ENCODE measurements at regions of chr11 and their contacts with region 1.

Region 1: DNA sequence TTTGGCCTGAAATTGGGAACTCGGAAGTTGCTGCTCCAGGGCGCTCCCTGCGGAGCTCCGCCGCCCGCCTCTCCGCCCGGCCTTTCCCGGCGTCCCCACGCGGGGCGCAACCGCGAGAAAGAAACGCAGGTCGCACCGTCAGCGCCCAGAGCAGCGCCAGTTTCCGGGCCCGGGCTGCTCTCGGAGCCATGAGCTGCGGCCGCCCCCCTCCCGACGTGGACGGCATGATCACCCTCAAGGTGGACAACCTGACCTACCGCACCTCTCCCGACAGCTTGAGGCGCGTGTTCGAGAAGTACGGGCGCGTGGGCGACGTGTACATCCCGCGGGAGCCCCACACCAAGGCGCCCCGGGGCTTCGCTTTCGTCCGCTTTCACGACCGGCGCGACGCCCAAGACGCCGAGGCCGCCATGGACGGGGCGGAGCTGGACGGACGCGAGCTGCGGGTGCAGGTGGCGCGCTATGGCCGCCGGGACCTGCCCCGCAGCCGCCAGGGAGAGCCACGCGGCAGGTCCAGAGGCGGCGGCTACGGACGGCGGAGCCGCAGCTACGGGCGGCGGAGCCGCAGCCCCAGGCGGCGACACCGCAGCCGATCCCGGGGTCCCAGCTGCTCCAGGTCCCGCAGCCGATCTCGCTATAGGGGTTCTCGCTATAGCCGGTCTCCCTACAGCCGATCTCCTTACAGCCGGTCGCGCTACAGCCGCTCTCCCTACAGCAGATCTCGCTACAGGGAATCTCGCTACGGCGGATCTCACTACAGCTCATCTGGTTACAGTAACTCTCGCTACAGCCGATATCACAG is 521 bp downstream of the SRSF8 start:
- DNase-seq: peak; percentile 60 to 95 (median 88)

Region 2: DNA sequence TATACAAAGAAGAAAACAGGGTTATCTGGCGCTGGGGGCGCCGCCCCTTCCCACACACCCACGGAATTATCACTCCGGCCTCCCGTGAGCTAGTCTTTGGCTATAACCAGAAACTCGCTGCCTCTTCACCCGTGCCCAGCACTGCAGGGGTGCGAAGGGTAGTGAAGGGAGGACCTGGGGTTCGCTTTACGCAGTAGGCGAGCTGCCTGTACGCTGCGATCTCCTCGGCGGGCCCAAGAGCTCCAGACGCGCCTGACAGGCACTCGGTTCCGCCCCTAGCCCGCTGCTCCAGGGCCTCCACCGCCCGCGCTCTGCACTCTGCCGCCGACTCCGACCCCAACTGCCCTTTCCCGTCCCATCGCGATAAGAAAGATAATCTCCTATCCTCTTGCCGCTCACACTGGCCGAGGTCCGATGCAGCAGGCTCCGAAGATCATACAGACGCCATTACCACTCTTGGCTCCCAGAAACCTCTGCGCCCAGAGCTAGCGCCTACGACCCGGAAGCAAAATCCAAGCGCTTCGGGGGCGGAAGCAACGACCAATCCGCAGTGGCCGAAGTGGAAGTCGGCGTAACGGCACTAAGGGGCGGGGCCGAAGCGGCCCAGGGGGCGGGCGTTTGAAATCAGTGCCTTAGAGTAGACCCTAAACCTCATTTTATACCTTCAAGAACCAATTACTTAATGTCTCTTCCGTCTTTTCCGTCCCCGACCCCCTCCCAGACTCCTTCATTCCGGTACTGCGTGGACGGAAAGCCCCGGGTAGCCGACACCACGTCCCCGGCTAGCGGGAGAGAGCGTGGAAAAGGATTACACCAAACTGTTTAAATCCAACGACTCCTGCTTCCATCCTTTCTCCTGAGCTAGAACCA is 93.9 kb before region 1 on chr11 and contains the starts of genes CWC15 and KDM4D:
- intact Hi-C with region 1: loop called (anchors 10 kb)
- DNase-seq: peak; percentile 91 to 99 (median 96)

Region 3: DNA sequence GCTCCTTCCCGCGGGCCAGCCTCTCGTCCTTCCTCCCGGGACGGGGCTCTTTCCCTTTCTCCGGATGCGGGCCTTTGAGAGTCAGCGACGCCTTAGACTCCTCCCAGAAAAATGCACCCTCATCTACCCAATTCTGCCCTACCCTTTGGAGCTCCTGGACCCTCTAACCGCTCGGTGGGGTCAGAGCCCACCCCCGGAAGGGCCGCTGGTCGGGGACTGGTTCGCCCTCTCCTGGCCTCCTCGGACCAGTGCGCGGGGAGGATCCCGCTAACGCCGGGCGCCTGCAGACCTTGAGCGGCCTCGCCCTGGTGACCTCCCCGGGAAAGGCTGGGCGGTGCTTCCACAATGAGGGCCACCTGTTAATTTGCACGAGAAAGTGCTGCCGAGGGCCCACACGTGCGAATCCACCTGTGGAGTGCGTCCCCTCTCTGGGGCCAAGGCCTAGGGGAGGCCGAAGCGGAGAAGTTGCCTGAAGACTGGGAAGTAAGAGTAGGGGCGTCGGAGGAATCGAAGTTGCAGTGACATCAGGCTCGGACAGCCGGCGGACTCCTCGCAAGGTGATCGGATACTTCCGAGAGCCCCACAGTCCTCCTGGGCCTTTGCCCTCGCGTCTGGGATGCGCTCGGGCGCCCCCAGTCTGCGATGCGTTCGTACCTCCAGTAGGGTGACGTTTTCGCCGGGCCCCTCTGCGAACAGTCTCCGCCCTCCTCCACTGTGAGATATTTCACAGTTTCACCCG is 83.9 kb after region 1 on chr11:
- intact Hi-C with region 1: loop called (anchors 2 kb)
- DNase-seq: peak; percentile 86 to 98 (median 94)

Region 4: GRCh38 chr11:95231127-95231880 is 164.1 kb after region 1 on chr11 and contains the start of gene SESN3:
- intact Hi-C with region 1: loop called (anchors 10 kb)
- DNase-seq: peak; percentile 93 to 99 (median 98)

Region 5: DNA sequence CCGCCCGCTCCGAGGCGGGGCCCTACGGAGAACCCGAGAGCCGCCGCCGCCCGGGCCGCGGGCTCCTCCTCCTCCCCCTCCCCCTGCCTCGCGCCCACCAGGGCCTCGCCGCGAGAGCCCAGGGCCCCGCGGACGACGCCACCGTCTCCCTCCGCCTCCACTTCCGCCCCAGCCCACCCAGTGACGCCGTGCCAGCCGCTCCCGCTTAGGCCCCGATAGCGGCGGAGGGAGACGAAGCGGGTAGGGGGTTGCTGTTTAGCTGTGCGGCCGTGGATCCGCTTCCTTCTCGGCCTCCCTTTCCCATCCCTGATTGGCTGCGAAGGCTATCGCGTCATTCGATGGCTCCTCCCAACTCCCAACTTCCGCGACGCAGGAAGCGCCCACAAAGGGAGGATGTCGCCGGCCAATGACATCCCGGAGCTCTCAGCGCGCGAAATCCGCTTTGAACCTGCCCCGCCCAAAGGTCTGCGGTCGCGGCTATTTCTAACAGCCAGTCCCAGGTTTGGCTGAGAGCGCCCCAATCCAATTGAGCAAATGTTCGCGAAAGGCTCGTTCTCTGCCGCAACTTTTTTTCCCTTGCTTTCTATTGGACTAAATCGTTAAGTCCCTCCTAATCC is 722.4 kb after region 1 on chr11 and contains the start of gene FAM76B:
- intact Hi-C with region 1: loop called (anchors 5 kb)
- DNase-seq: peak; percentile 96 to 99 (median 98)

Measured in head of caudate nucleus (tissue), 42 donors.